ENCODE measurements at regions of chr10 and their contacts with region 1.

Region 1: GRCh38 chr10:95864906-95865813 is 42.6 kb upstream of the CC2D2B start:
- DNase-seq: peak; percentile 55 to 64
- H3K4me3 ChIP-seq: no peak overlapping the region
- H3K4me3 Mint-ChIP-seq: no peak overlapping the region
- H3K27ac Mint-ChIP-seq: no peak overlapping the region
- H3K4me1 ChIP-seq: peaks cover 17% of the 10 kb centered on the region; the same call in 1 of the 2 replicates
- H3K4me1 Mint-ChIP-seq: peaks cover 15% of the 10 kb centered on the region
- H3K27me3 ChIP-seq: no peaks in the 10 kb centered on the region
- H3K27me3 Mint-ChIP-seq: no peaks in the 10 kb centered on the region
- CTCF ChIP-seq: peak; percentile 56 to 64

Region 2: DNA sequence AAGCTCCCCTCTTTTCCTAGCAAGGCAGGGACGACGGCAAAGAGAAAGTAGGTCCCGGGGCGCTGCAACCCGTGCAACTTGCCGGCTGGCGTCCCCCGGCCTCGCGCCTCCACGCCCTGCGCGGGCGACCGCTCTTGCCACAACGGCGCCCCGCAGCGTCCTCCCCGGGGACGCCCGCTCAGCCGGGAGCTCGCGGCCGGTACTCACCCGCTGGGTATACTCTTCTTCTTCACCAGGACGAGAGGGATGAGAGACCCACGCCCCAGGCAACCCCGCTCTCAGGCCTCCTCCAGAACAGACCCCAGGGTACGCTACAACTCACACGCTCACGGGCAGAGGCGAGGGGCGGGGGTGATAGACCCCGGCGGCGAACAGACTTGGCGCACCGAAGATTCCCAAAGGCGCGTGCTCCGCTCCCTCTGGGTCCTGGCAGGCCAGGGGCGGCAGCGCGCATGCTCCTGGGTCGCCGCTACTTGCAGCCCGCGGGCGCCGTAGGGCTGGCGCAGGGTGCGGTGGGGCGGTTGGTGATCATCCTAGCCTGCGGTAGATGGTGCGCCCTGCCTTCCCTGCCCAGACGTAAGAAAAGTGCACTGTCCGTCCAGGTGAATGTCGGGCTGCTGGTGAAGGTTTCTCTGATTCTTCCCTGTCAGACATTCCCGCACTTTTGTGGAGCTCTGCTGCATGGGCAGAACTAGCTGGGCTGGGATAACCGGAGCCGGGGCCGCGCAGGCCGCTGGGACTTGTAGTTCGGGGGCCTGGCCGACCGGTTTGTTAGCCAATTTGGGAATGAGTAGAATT is 42.5 kb after region 1 on chr10 and contains the start of gene CC2D2B:
- CTCF ChIA-PET with region 1: interaction called, 3 read pairs
- POLR2A ChIA-PET with region 1: no interaction called
- intact Hi-C with region 1: loop called (anchors 1 kb)
- DNase-seq: peak; percentile 83 to 90
- H3K4me3 ChIP-seq: peak within 1 kb of the TSS; percentile 62
- H3K4me3 Mint-ChIP-seq: peak within 1 kb of the TSS; percentile 91
- H3K27ac Mint-ChIP-seq: peak within 1 kb of the TSS; percentile 94
- H3K4me1 ChIP-seq: no peaks in the 10 kb centered on the region
- H3K4me1 Mint-ChIP-seq: peaks cover 7% of the 10 kb centered on the region
- H3K27me3 ChIP-seq: no peaks in the 10 kb centered on the region
- H3K27me3 Mint-ChIP-seq: peaks cover 2% of the 10 kb centered on the region
- CTCF ChIP-seq: peak in 1 of 2 experiments; percentile 27
- total RNA-seq, gene CC2D2B: 0.39 and 0.77 TPM in 2 replicates

Measured in Caco-2 (cell line).